K562 (cell line): ENCODE measurements at regions of chr3 and their contacts with region 1.

Region 1: GRCh38 chr3:64915778-64916177 is 228.0 kb upstream of the ADAMTS9 start:
- DNase-seq: peak in 3 of 4 experiments; percentile 7 to 36 (median 8)
- ATAC-seq: peak; percentile 26; the same call in 1 of the 3 replicates
- H3K4me3 ChIP-seq: no peak overlapping the region
- H3K27ac ChIP-seq: no peak overlapping the region
- H3K4me1 ChIP-seq: peaks cover 4 to 41% of the 10 kb centered on the region in 2 experiments; a peak in 4 of 5 replicates
- H3K27me3 ChIP-seq: no peaks in the 10 kb centered on the region
- CTCF ChIP-seq: no peak
- EP300 ChIP-seq: no peak
- POLR2A ChIP-seq: no peak
- RAD21 ChIP-seq: no peak

Region 2: DNA sequence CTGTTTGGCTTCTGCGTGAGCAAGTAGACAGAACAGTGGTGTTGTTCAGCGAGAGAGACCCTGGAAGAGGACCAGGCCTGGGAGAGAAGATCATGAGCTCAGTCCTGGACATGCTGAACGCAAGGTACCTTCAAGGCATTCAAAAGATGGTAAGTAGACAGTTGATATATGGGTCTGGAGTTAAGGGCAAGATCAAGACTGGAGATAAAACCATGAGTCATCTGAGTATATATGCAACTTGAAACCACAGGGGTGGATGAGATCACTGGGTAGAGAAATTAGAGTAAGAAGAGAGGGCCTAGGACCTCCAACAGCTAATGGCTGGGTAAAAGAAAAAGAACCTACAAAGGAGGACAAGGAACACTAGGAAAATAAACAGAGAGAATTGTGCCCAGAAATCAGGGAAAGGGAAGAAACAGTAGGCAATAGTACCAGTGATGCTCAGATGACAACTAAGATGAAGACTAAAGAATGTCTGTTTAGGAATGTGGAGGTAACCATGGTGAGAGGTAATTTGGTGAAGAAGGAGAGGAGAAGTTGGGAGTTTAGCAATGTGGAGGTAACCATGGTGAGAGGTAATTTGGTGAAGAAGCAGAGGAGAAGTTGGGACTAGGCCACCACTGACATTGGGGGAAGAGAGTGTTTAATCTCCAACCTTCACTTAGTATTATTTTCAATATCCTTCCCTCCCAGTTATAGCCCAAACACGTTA is 115.2 kb after region 1 on chr3:
- CTCF ChIA-PET with region 1: no interaction called
- POLR2A ChIA-PET with region 1: no interaction called
- in situ Hi-C with region 1: no loop called
- intact Hi-C with region 1: loop called (anchors 10 kb)
- DNase-seq: peak; percentile 60 to 77 (median 64)
- ATAC-seq: peak; percentile 93
- H3K4me3 ChIP-seq: no peak overlapping the region
- H3K27ac ChIP-seq: peak overlapping the region; percentile 63
- H3K4me1 ChIP-seq: peaks cover 0 to 29% of the 10 kb centered on the region in 2 experiments; a peak in 2 of 5 replicates
- H3K27me3 ChIP-seq: no peaks in the 10 kb centered on the region
- CTCF ChIP-seq: no peak
- EP300 ChIP-seq: peak; percentile 77
- POLR2A ChIP-seq: no peak
- RAD21 ChIP-seq: no peak